CD4-positive, alpha-beta memory T cell (primary cell): ENCODE measurements at regions of chr11 and their contacts with region 1.

Region 1: DNA sequence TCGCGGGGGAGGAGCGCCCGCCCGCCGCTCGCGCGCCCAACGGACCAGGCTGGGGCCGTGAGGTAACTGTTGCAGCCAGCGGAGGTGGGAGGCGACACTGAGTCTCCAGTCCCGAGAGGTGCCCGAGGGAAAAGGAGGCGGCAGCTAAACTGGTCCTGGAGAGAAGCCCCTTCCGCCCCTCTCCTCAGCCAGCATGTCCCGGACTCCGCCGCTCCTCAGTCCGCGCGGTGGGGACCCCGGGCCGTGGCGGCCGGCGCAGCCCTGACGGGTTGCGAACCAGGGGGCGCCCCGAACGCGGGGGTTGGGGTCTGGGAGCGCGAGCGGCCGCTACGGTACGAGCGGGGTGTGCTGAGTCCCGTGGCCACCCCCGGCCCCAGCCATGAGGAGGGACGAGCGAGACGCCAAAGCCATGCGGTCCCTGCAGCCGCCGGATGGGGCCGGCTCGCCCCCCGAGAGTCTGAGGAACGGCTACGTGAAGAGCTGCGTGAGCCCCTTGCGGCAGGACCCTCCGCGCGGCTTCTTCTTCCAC is at the start of gene PDE3B:
- DNase-seq: peak; percentile 65 to 71 (median 65)
- H3K4me3 ChIP-seq: peak within 1 kb of the TSS; percentile 89 to 95
- H3K4me3 Mint-ChIP-seq: peak within 1 kb of the TSS; percentile 91 to 97 (median 95)
- H3K27ac ChIP-seq: peak within 1 kb of the TSS; percentile 68
- H3K27ac Mint-ChIP-seq: peak within 1 kb of the TSS; percentile 79 to 94 (median 91)
- H3K4me1 ChIP-seq: peaks cover 65% of the 10 kb centered on the region
- H3K4me1 Mint-ChIP-seq: peaks cover 43 to 65% (median 54%) of the 10 kb centered on the region in 4 donors
- H3K27me3 ChIP-seq: no peaks in the 10 kb centered on the region
- H3K27me3 Mint-ChIP-seq: peaks cover 0 to 2% of the 10 kb centered on the region in 2 donors
- total RNA-seq, gene PDE3B: 219 to 222 TPM

Region 2: GRCh38 chr11:13335319-13335718 is 1308.4 kb before region 1 on chr11:
- CTCF ChIA-PET with region 1: no interaction called
- POLR2A ChIA-PET with region 1: no interaction called
- intact Hi-C with region 1: no loop called
- DNase-seq: peak; percentile 70 to 73 (median 71)
- H3K4me3 ChIP-seq: no peak overlapping the region
- H3K4me3 Mint-ChIP-seq: peak overlapping the region in 2 of 8 donors; percentile 2 to 9
- H3K27ac ChIP-seq: no peak overlapping the region
- H3K27ac Mint-ChIP-seq: peak overlapping the region; percentile 0 to 87 (median 26)
- H3K4me1 ChIP-seq: peaks cover 90% of the 10 kb centered on the region
- H3K4me1 Mint-ChIP-seq: peaks cover 60 to 89% (median 75%) of the 10 kb centered on the region in 4 donors
- H3K27me3 ChIP-seq: no peaks in the 10 kb centered on the region
- H3K27me3 Mint-ChIP-seq: no peaks in the 10 kb centered on the region

Region 3: GRCh38 chr11:14519917-14520746 is 123.6 kb before region 1 on chr11 and contains the start of gene PSMA1:
- CTCF ChIA-PET with region 1: interaction called, 3 read pairs
- POLR2A ChIA-PET with region 1: interaction called, 30 read pairs
- intact Hi-C with region 1: loop called (anchors 1 kb)
- DNase-seq: peak; percentile 88 to 96 (median 91)
- H3K4me3 ChIP-seq: peak within 1 kb of the TSS; percentile 63 to 95
- H3K4me3 Mint-ChIP-seq: peak within 1 kb of the TSS; percentile 93 to 99 (median 98)
- H3K27ac ChIP-seq: peak within 1 kb of the TSS; percentile 99
- H3K27ac Mint-ChIP-seq: peak within 1 kb of the TSS; percentile 95 to 98 (median 98)
- H3K4me1 ChIP-seq: peaks cover 27% of the 10 kb centered on the region
- H3K4me1 Mint-ChIP-seq: peaks cover 17 to 41% (median 29%) of the 10 kb centered on the region in 4 donors
- H3K27me3 ChIP-seq: no peaks in the 10 kb centered on the region
- H3K27me3 Mint-ChIP-seq: no peaks in the 10 kb centered on the region
- total RNA-seq, gene PSMA1: 95.8 to 105 TPM

Region 4: DNA sequence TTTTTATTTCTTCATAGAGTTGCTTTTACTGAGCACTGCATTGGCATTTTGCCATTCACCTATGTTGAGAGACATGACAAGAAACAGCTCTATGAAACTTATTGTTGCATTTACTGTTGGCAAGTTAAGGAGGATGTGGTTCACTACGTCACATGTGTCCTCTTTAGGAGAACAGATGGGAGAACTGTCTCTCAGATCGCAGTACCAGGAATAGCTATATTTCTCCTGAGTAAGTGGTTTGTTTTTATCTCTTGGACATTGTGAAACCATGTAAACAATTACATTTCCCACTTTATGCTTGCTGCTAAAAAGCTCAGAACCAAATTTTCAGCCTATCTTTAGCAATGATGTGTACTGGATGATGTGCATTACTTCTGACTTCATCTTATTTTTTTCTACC is 88.8 kb before region 1 on chr11:
- CTCF ChIA-PET with region 1: interaction called, 8 read pairs
- POLR2A ChIA-PET with region 1: interaction called, 37 read pairs
- intact Hi-C with region 1: loop called (anchors 5 kb)
- DNase-seq: peak; percentile 66 to 83 (median 78)
- H3K4me3 ChIP-seq: no peak overlapping the region
- H3K4me3 Mint-ChIP-seq: peak overlapping the region in 7 of 8 donors; percentile 12 to 84 (median 50)
- H3K27ac ChIP-seq: peak overlapping the region; percentile 37
- H3K27ac Mint-ChIP-seq: peak overlapping the region; percentile 79 to 97 (median 95)
- H3K4me1 ChIP-seq: peaks cover 27% of the 10 kb centered on the region
- H3K4me1 Mint-ChIP-seq: peaks cover 21 to 44% (median 27%) of the 10 kb centered on the region in 4 donors
- H3K27me3 ChIP-seq: no peaks in the 10 kb centered on the region
- H3K27me3 Mint-ChIP-seq: peaks cover 0 to 2% of the 10 kb centered on the region in 2 donors

Region 5: DNA sequence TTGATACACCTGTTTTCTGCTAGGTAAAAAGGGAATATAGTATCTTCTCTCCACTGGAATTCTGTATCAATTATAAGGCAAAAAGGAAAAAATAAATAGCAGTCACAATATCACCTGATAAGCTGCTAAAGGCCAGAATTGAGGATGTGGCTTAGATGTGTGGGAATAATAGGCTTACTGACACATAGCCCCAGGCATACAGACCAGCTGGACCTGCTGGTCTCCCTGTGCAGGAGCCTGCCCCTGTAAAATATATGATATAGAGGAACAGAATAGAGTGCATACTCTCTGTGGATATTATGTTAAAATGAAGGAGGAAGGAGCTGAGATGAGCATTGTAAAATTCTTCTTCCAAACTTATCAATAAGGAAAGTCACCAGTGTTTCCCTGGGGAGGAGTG is 37.0 kb before region 1 on chr11:
- CTCF ChIA-PET with region 1: interaction called, 6 read pairs
- POLR2A ChIA-PET with region 1: interaction called, 11 read pairs
- intact Hi-C with region 1: no loop called
- DNase-seq: no peak
- H3K4me3 ChIP-seq: no peak overlapping the region
- H3K4me3 Mint-ChIP-seq: peak overlapping the region in 1 of 8 donors; percentile 35
- H3K27ac ChIP-seq: no peak overlapping the region
- H3K27ac Mint-ChIP-seq: peak overlapping the region in 1 of 7 donors; percentile 19
- H3K4me1 ChIP-seq: no peaks in the 10 kb centered on the region
- H3K4me1 Mint-ChIP-seq: peaks cover 4 to 17% (median 11%) of the 10 kb centered on the region in 4 donors
- H3K27me3 ChIP-seq: no peaks in the 10 kb centered on the region
- H3K27me3 Mint-ChIP-seq: no peaks in the 10 kb centered on the region

Region 6: GRCh38 chr11:14727215-14727614 is 83.5 kb after region 1 on chr11:
- CTCF ChIA-PET with region 1: no interaction called
- POLR2A ChIA-PET with region 1: interaction called, 10 read pairs
- intact Hi-C with region 1: no loop called
- DNase-seq: no peak
- H3K4me3 ChIP-seq: no peak overlapping the region
- H3K4me3 Mint-ChIP-seq: peak overlapping the region in 2 of 8 donors; percentile 3 to 51
- H3K27ac ChIP-seq: no peak overlapping the region
- H3K27ac Mint-ChIP-seq: no peak overlapping the region
- H3K4me1 ChIP-seq: peaks cover 30% of the 10 kb centered on the region
- H3K4me1 Mint-ChIP-seq: peaks cover 43 to 68% (median 47%) of the 10 kb centered on the region in 4 donors
- H3K27me3 ChIP-seq: no peaks in the 10 kb centered on the region
- H3K27me3 Mint-ChIP-seq: no peaks in the 10 kb centered on the region

Region 7: DNA sequence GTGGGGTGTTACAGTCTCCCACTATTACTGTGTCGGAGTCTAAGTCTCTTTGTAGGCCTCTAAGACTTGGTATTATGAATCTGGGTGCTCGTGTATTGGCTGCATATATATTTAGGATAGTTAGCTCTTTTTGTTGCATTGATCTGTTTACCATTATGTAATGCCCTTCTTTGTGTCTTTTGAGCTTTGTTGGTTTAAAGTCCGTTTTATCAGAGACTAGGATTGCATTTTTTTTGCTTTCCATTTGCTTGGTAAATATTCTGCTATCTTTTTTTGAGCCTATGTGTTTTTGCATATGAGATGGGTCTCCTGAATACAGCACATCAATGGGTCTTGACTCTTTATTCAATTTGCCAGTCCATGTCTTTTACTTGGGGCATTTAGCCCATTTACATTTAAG is 97.4 kb after region 1 on chr11:
- CTCF ChIA-PET with region 1: no interaction called
- POLR2A ChIA-PET with region 1: no interaction called
- intact Hi-C with region 1: no loop called
- DNase-seq: no peak
- H3K4me3 ChIP-seq: no peak overlapping the region
- H3K4me3 Mint-ChIP-seq: peak overlapping the region in 1 of 8 donors; percentile 64
- H3K27ac ChIP-seq: no peak overlapping the region
- H3K27ac Mint-ChIP-seq: peak overlapping the region in 3 of 7 donors; percentile 11 to 68 (median 33)
- H3K4me1 ChIP-seq: peaks cover 21% of the 10 kb centered on the region
- H3K4me1 Mint-ChIP-seq: peaks cover 40 to 76% (median 54%) of the 10 kb centered on the region in 4 donors
- H3K27me3 ChIP-seq: no peaks in the 10 kb centered on the region
- H3K27me3 Mint-ChIP-seq: no peaks in the 10 kb centered on the region

Region 8: DNA sequence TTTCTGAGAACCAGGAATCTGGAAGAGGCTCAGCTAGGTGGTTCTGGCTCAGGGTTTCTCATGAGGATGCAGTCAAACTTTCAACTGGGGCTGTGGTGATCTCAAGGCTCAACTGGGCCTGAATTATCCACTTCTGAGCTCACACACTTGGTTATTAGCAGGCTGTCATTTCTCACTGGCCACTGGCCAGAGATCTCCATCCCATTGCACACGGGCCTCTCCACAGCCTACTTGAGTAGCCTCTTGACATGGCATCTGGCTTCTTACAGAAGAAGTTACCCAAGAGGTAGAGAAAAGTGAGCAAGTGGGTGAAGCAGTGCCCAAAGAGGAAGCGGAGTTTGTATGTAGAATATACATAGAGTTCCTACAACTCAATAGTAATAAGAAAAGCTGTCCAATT is 312.4 kb after region 1 on chr11:
- CTCF ChIA-PET with region 1: no interaction called
- POLR2A ChIA-PET with region 1: no interaction called
- intact Hi-C with region 1: no loop called
- DNase-seq: no peak
- H3K4me3 ChIP-seq: no peak overlapping the region
- H3K4me3 Mint-ChIP-seq: no peak overlapping the region
- H3K27ac ChIP-seq: no peak overlapping the region
- H3K27ac Mint-ChIP-seq: no peak overlapping the region
- H3K4me1 ChIP-seq: no peaks in the 10 kb centered on the region
- H3K4me1 Mint-ChIP-seq: no peaks in the 10 kb centered on the region
- H3K27me3 ChIP-seq: no peaks in the 10 kb centered on the region
- H3K27me3 Mint-ChIP-seq: peaks cover 0 to 3% of the 10 kb centered on the region in 2 donors